Esophagus squamous epithelium (tissue), 5 donors: ENCODE measurements at regions of chr9 and their contacts with region 1.

Region 1: GRCh38 chr9:121213136-121213806 is 11.6 kb upstream of the RAB14 start:
- DNase-seq: peak; percentile 10
- H3K4me3 ChIP-seq: no peak overlapping the region
- H3K27ac ChIP-seq: peak overlapping the region; percentile 41 to 74 (median 57)
- H3K4me1 ChIP-seq: peaks cover 0 to 11% (median 5%) of the 10 kb centered on the region in 3 donors
- H3K27me3 ChIP-seq: no peaks in the 10 kb centered on the region
- CTCF ChIP-seq: peak; percentile 83 to 98 (median 96)
- POLR2A ChIP-seq: no peak

Region 2: GRCh38 chr9:121085661-121086060 is 127.6 kb before region 1 on chr9:
- intact Hi-C with region 1: no loop called
- DNase-seq: no peak
- H3K4me3 ChIP-seq: no peak overlapping the region
- H3K27ac ChIP-seq: no peak overlapping the region
- H3K4me1 ChIP-seq: no peaks in the 10 kb centered on the region
- H3K27me3 ChIP-seq: no peaks in the 10 kb centered on the region
- CTCF ChIP-seq: no peak
- POLR2A ChIP-seq: no peak

Region 3: DNA sequence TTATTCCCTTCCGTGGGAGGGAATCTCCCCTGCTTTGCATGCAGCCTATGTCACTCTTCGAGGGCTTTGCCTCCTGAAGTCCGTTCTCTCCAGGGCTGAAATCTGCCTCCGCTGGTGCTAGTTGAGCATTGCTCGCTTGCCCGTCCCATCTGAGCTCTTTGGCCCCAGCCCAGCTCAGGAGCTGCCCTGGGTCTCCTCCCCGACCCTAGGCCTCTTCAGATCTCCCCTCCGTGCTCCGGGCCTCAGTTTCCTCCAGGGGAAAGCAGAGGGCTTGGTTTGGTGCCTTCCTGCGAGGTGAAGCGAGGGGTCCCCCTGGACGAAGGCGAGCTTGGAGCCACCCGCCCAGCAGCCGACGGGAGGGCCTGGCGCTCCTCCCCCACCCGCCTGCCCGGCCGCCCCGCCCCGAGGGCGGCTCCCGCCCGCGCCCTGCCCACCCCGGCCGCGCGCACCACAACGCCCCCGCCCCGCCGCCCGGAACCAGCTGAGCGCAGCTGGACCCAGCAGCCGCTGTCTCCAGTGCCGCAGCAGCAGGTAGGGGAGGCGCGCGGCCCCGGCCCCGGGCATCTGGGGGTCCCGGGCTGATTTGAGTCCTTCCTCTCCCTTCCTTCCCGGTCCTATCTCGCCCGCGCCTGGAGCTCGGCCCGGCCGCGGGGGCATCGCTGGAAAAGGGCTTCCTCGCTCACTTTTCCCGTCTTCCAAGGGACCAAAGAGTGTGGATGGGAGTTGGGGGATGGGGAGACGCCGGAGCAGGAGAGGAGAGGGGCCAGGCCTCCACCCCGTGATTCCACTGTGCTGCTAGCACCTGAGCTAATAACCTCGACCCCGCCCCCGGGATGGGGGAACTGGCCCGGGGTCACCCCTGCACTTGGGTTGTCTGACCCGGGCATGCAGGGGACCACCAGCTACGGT is 54.7 kb after region 1 on chr9 and contains the start of gene GSN:
- intact Hi-C with region 1: loop called (anchors 5 kb)
- DNase-seq: no peak
- H3K4me3 ChIP-seq: peak within 1 kb of the TSS; percentile 85 to 99 (median 90)
- H3K27ac ChIP-seq: peak within 1 kb of the TSS; percentile 89 to 98 (median 95)
- H3K4me1 ChIP-seq: peaks cover 35 to 65% (median 41%) of the 10 kb centered on the region in 3 donors
- H3K27me3 ChIP-seq: no peaks in the 10 kb centered on the region
- CTCF ChIP-seq: no peak
- POLR2A ChIP-seq: peak in 2 of 4 donors; percentile 89 to 92
- total RNA-seq, gene GSN: 287 to 1,151 (median 926) TPM

Region 4: GRCh38 chr9:121299467-121300234 is 86.4 kb after region 1 on chr9:
- intact Hi-C with region 1: loop called (anchors 10 kb)
- DNase-seq: no peak
- H3K4me3 ChIP-seq: peak overlapping the region; percentile 46 to 82 (median 66)
- H3K27ac ChIP-seq: peak overlapping the region; percentile 88 to 95 (median 94)
- H3K4me1 ChIP-seq: peaks cover 56 to 98% (median 82%) of the 10 kb centered on the region in 3 donors
- H3K27me3 ChIP-seq: no peaks in the 10 kb centered on the region
- CTCF ChIP-seq: no peak
- POLR2A ChIP-seq: peak in 2 of 4 donors; percentile 44 to 49

Region 5: DNA sequence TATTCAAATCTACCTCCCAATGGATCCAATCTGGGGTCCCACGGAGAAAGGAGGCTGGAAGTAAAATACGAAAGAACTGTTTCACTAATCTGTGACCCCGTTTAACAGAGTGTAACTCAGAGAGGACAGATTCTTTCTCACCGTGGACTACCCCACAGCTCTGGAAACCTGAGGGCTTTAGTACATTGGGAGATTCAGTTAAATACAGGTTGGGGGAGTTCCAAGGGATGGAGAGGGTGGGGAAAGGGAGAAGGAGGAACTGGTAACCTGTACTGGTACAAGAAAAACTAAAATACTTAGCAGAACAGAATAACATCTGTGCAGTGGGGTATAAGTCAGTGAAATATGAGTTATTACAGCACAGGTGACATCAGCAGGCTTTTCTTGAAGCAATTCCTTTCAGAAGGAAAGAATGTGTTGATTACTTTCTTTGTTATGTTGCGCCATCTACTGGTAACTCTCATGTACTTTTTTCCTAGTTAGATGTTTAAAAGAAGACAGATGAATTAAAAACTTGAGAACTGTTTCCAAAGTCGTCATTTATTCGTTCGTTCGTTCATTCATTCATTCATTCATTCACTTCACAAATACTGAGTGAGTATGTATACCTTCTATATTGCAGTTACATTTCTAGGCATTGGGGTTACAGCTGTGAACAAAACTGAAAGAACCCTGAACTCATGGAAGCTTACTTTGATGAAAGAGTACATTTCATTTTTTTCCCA is 186.8 kb after region 1 on chr9:
- intact Hi-C with region 1: loop called (anchors 5 kb)
- DNase-seq: no peak
- H3K4me3 ChIP-seq: no peak overlapping the region
- H3K27ac ChIP-seq: peak overlapping the region in 3 of 4 donors; percentile 67 to 85 (median 79)
- H3K4me1 ChIP-seq: peaks cover 0 to 29% (median 0%) of the 10 kb centered on the region in 3 donors
- H3K27me3 ChIP-seq: no peaks in the 10 kb centered on the region
- CTCF ChIP-seq: peak; percentile 57 to 82 (median 80)
- POLR2A ChIP-seq: no peak

Region 6: DNA sequence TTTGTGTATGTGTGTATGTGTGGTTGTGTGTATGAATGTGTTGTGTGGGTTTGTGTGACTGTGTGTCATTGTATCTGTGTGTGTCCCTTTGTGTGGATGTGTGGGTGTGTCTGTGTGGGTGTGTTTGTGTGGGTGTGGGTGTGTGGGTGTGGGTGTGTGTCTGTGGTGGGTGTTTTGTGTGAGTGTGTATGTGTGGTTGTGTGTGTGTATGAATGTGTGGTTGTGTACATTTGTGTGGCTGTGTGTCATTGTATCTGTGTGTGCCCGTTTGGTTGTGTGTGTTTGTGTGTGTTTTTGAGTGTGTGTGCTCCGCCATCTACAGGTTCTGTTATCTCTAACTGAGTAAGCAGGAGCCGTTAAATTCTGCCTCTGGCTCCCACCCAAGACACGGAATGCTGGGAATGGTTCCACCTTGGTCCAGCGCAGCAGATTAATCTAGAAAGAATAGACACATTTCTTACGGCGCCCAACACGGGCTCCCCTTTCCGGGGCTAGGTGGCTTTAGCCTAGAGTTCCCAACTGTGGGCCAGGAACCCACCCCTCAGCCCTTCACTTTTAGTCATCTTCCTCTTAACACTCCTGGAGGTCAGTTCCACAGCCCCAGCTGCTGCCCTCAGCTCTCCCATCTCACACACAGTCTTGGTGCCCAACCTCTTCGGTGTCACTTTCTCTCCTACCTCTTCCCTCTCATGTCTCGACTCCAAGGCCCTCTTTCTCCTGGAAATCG is 682.7 kb after region 1 on chr9:
- intact Hi-C with region 1: no loop called
- DNase-seq: no peak
- H3K4me3 ChIP-seq: no peak overlapping the region
- H3K27ac ChIP-seq: no peak overlapping the region
- H3K4me1 ChIP-seq: no peaks in the 10 kb centered on the region
- H3K27me3 ChIP-seq: no peaks in the 10 kb centered on the region
- CTCF ChIP-seq: no peak
- POLR2A ChIP-seq: no peak